CD4-positive, alpha-beta memory T cell (primary cell): ENCODE measurements at regions of chr5 and their contacts with region 1.

Region 1: GRCh38 chr5:34474573-34475021 is 181.5 kb upstream of the RAI14 start:
- DNase-seq: peak in 4 of 5 donors; percentile 15 to 28 (median 24)
- H3K4me3 ChIP-seq: no peak overlapping the region
- H3K4me3 Mint-ChIP-seq: no peak overlapping the region
- H3K27ac ChIP-seq: no peak overlapping the region
- H3K27ac Mint-ChIP-seq: no peak overlapping the region
- H3K4me1 ChIP-seq: no peaks in the 10 kb centered on the region
- H3K4me1 Mint-ChIP-seq: peaks cover 0 to 2% (median 0%) of the 10 kb centered on the region in 4 donors
- H3K27me3 ChIP-seq: no peaks in the 10 kb centered on the region
- H3K27me3 Mint-ChIP-seq: peaks cover 7 to 13% of the 10 kb centered on the region in 2 donors

Region 2: GRCh38 chr5:34459908-34460307 is 14.7 kb before region 1 on chr5:
- CTCF ChIA-PET with region 1: interaction called, 13 read pairs
- POLR2A ChIA-PET with region 1: no interaction called
- intact Hi-C with region 1: no loop called
- DNase-seq: no peak
- H3K4me3 ChIP-seq: no peak overlapping the region
- H3K4me3 Mint-ChIP-seq: no peak overlapping the region
- H3K27ac ChIP-seq: no peak overlapping the region
- H3K27ac Mint-ChIP-seq: no peak overlapping the region
- H3K4me1 ChIP-seq: no peaks in the 10 kb centered on the region
- H3K4me1 Mint-ChIP-seq: peaks cover 0 to 2% (median under 1%) of the 10 kb centered on the region in 4 donors
- H3K27me3 ChIP-seq: no peaks in the 10 kb centered on the region
- H3K27me3 Mint-ChIP-seq: no peaks in the 10 kb centered on the region

Region 3: GRCh38 chr5:34486160-34486848 is 11.7 kb after region 1 on chr5:
- CTCF ChIA-PET with region 1: interaction called, 36 read pairs
- POLR2A ChIA-PET with region 1: no interaction called
- intact Hi-C with region 1: no loop called
- DNase-seq: peak in 4 of 5 donors; percentile 34 to 47 (median 42)
- H3K4me3 ChIP-seq: no peak overlapping the region
- H3K4me3 Mint-ChIP-seq: no peak overlapping the region
- H3K27ac ChIP-seq: no peak overlapping the region
- H3K27ac Mint-ChIP-seq: no peak overlapping the region
- H3K4me1 ChIP-seq: no peaks in the 10 kb centered on the region
- H3K4me1 Mint-ChIP-seq: peaks cover 3 to 5% (median 4%) of the 10 kb centered on the region in 4 donors
- H3K27me3 ChIP-seq: no peaks in the 10 kb centered on the region
- H3K27me3 Mint-ChIP-seq: peaks cover 17 to 30% of the 10 kb centered on the region in 2 donors